Left lung (tissue), 14 donors: ENCODE measurements at regions of chr14 and their contacts with region 1.

Region 1: GRCh38 chr14:60079724-60080123 is 12.0 kb upstream of the PCNX4 start:
- DNase-seq: no peak
- ATAC-seq: no peak
- H3K4me3 ChIP-seq: no peak overlapping the region
- H3K27ac ChIP-seq: no peak overlapping the region
- H3K4me1 ChIP-seq: no peaks in the 10 kb centered on the region
- H3K27me3 ChIP-seq: no peaks in the 10 kb centered on the region
- CTCF ChIP-seq: no peak

Region 2: GRCh38 chr14:60164712-60165546 is 85.2 kb after region 1 on chr14 and contains the start of gene DHRS7:
- intact Hi-C with region 1: loop called in 1 of 2 experiments (anchors 10 kb)
- DNase-seq: peak; percentile 82 to 100 (median 88)
- ATAC-seq: peak; percentile 99
- H3K4me3 ChIP-seq: peak within 1 kb of the TSS; percentile 67 to 86
- H3K27ac ChIP-seq: peak within 1 kb of the TSS; percentile 91 to 95
- H3K4me1 ChIP-seq: peaks cover 0 to 39% of the 10 kb centered on the region in 2 donors
- H3K27me3 ChIP-seq: no peaks in the 10 kb centered on the region
- CTCF ChIP-seq: peak in 1 of 2 donors; percentile 63
- polyA plus RNA-seq, gene DHRS7: 52.9 to 66.6 (median 54.2) TPM